Mammary epithelial cell (primary cell): ENCODE measurements at regions of chr2 and their contacts with region 1.

Region 1: DNA sequence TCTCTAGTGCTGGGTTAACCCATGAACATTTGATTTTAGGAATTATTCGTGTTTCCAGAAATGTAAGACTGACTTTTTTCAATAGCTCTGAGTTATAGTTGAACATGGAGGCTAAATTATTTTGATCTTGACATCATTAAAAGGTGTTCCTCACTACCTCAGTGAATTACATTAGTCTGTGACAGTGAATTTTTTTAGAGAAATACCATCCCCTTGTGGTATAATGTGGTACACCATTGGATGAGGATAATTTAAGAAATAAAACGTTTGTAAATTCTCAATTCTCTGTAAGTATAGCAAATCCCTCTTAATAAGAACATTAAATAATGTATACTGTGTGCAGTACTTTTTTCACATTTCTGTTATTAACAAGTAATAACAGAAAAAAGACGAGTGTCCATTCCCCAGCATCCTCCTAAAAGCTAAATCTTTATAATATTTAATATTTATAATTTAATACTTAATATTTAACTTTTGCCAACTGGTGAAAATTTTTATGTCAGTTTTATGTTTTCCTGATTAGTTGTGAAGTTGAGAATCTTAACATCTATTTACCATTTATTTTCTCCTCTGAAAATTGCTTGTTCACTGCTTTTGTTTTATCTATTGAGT is 70.3 kb upstream of the CWC22 start:
- DNase-seq: peak; percentile 6
- H3K4me3 ChIP-seq: no peak overlapping the region
- H3K27ac ChIP-seq: no peak overlapping the region
- H3K4me1 ChIP-seq: no peaks in the 10 kb centered on the region
- H3K27me3 ChIP-seq: peaks cover 2% of the 10 kb centered on the region
- CTCF ChIP-seq: peak; percentile 79 to 92

Region 2: GRCh38 chr2:178796079-178796677 is 1281.2 kb before region 1 on chr2:
- CTCF ChIA-PET with region 1: no interaction called
- dilution Hi-C with region 1: no loop called
- in situ Hi-C with region 1: no loop called
- intact Hi-C with region 1: loop called (anchors 10 kb)
- DNase-seq: peak; percentile 10
- H3K4me3 ChIP-seq: no peak overlapping the region
- H3K27ac ChIP-seq: no peak overlapping the region
- H3K4me1 ChIP-seq: no peaks in the 10 kb centered on the region
- H3K27me3 ChIP-seq: no peaks in the 10 kb centered on the region
- CTCF ChIP-seq: peak; percentile 40 to 57

Region 3: DNA sequence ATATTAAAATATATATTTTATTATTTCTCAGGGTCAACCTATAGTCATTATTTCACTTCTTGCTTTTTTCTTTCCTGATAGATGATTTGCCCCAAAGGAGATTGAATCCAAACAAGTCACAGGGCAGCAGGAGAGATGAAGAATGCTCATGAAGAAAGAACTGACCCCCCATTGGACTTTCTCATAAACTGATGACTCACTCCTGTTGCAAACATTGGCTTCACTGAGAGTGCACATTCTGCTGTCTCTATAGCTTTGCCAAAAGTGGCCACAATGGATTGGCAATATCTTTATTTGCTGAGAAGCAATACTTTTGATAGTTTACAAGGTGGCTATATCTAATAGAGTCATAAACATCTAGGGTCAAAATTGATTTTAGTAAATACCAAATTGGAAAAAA is 160.1 kb before region 1 on chr2:
- CTCF ChIA-PET with region 1: no interaction called
- dilution Hi-C with region 1: loop called (anchors 10 kb)
- in situ Hi-C with region 1: no loop called
- intact Hi-C with region 1: no loop called
- DNase-seq: peak; percentile 16
- H3K4me3 ChIP-seq: no peak overlapping the region
- H3K27ac ChIP-seq: no peak overlapping the region
- H3K4me1 ChIP-seq: no peaks in the 10 kb centered on the region
- H3K27me3 ChIP-seq: no peaks in the 10 kb centered on the region
- CTCF ChIP-seq: no peak

Region 4: GRCh38 chr2:180012523-180012922 is 64.9 kb before region 1 on chr2:
- CTCF ChIA-PET with region 1: interaction called, 6 read pairs
- dilution Hi-C with region 1: no loop called
- in situ Hi-C with region 1: no loop called
- intact Hi-C with region 1: loop called (anchors 1 kb)
- DNase-seq: peak; percentile 92
- H3K4me3 ChIP-seq: no peak overlapping the region
- H3K27ac ChIP-seq: peak overlapping the region; percentile 30
- H3K4me1 ChIP-seq: peaks cover 6% of the 10 kb centered on the region
- H3K27me3 ChIP-seq: no peaks in the 10 kb centered on the region
- CTCF ChIP-seq: peak in 1 of 2 donors; percentile 39

Region 5: GRCh38 chr2:180343528-180344345 is 266.3 kb after region 1 on chr2:
- CTCF ChIA-PET with region 1: no interaction called
- dilution Hi-C with region 1: no loop called
- in situ Hi-C with region 1: no loop called
- intact Hi-C with region 1: no loop called
- DNase-seq: no peak
- H3K4me3 ChIP-seq: no peak overlapping the region
- H3K27ac ChIP-seq: no peak overlapping the region
- H3K4me1 ChIP-seq: no peaks in the 10 kb centered on the region
- H3K27me3 ChIP-seq: no peaks in the 10 kb centered on the region
- CTCF ChIP-seq: no peak